ENCODE measurements at regions of chr6 and their contacts with region 1.

Region 1: GRCh38 chr6:37051138-37052026 is 45.9 kb downstream of the FGD2 start:
- DNase-seq: no peak
- H3K4me3 ChIP-seq: peak overlapping the region; percentile 1; the same call in 1 of the 2 replicates
- CTCF ChIP-seq: peak; percentile 96

Region 2: DNA sequence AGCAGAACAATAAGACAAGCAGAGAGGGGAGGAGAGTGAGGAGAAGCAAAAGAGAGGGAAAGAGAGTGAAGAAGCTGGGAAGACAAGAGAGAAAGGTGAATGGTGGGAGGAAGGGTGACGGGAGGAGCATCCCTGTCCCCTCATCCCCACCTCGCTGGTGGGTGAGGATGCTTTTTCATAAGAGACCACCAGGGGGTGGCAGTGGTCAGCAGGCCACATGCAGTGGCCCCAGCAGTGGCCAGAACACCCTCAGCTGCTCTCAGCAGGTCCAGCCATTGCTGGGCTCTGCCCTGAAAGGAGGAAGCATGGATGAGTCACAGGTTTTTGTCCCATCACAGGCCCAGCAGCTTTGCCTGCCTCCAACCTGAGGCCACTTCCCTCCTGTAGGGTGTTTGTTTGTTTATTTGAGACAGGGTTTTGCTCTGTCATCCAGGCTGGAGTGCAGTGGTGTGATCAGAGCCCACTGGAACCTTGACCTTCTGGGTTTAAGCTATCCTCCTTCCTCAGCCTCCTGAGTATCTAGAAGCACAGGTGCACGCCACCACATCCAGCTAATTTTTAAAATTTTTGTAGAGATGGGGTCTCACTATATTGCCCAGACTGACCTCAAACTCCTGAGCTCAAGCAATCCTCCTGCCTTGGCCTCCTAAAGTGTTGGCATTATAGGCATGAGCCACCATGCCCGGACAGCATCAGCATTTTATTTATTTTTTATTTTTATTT is 22.0 kb before region 1 on chr6:
- CTCF ChIA-PET with region 1: interaction called, 118 read pairs
- POLR2A ChIA-PET with region 1: no interaction called
- DNase-seq: no peak
- H3K4me3 ChIP-seq: no peak overlapping the region
- CTCF ChIP-seq: peak; percentile 79

Region 3: GRCh38 chr6:37038292-37039198 is 12.8 kb before region 1 on chr6:
- CTCF ChIA-PET with region 1: interaction called, 67 read pairs
- POLR2A ChIA-PET with region 1: no interaction called
- DNase-seq: no peak
- H3K4me3 ChIP-seq: no peak overlapping the region
- CTCF ChIP-seq: no peak

Region 4: GRCh38 chr6:37134606-37135191 is 83.3 kb after region 1 on chr6:
- CTCF ChIA-PET with region 1: interaction called, 10 read pairs
- POLR2A ChIA-PET with region 1: interaction called, 5 read pairs
- DNase-seq: peak; percentile 94
- H3K4me3 ChIP-seq: no peak overlapping the region; the same call in 1 of the 2 replicates
- CTCF ChIP-seq: no peak

Region 5: GRCh38 chr6:37160922-37161778 is 109.8 kb after region 1 on chr6:
- CTCF ChIA-PET with region 1: interaction called, 522 read pairs
- POLR2A ChIA-PET with region 1: no interaction called
- DNase-seq: peak; percentile 64
- H3K4me3 ChIP-seq: no peak overlapping the region
- CTCF ChIP-seq: no peak

Measured in AG04449 (cell line).